CD14-positive monocyte (primary cell): ENCODE measurements at regions of chr3 and their contacts with region 1.

Region 1: GRCh38 chr3:107235928-107236315 is 141.3 kb upstream of the CCDC54 start:
- DNase-seq: peak; percentile 44 to 62 (median 56)
- H3K4me3 ChIP-seq: peak overlapping the region; percentile 16 to 63 (median 26)
- H3K4me3 Mint-ChIP-seq: peak overlapping the region; percentile 59 to 72
- H3K27ac ChIP-seq: no peak overlapping the region
- H3K27ac Mint-ChIP-seq: no peak overlapping the region
- H3K4me1 ChIP-seq: peaks cover 10 to 11% of the 10 kb centered on the region in 2 donors
- H3K4me1 Mint-ChIP-seq: peaks cover 12% of the 10 kb centered on the region
- H3K27me3 ChIP-seq: no peaks in the 10 kb centered on the region
- H3K27me3 Mint-ChIP-seq: peaks cover 0 to 3% (median 1%) of the 10 kb centered on the region in 3 donors
- CTCF ChIP-seq: peak; percentile 88

Region 2: GRCh38 chr3:107710851-107711250 is 474.9 kb after region 1 on chr3:
- intact Hi-C with region 1: no loop called
- DNase-seq: no peak
- H3K4me3 ChIP-seq: no peak overlapping the region
- H3K4me3 Mint-ChIP-seq: no peak overlapping the region
- H3K27ac ChIP-seq: no peak overlapping the region
- H3K27ac Mint-ChIP-seq: no peak overlapping the region
- H3K4me1 ChIP-seq: no peaks in the 10 kb centered on the region
- H3K4me1 Mint-ChIP-seq: peaks cover 2% of the 10 kb centered on the region
- H3K27me3 ChIP-seq: no peaks in the 10 kb centered on the region
- H3K27me3 Mint-ChIP-seq: no peaks in the 10 kb centered on the region
- CTCF ChIP-seq: no peak

Region 3: DNA sequence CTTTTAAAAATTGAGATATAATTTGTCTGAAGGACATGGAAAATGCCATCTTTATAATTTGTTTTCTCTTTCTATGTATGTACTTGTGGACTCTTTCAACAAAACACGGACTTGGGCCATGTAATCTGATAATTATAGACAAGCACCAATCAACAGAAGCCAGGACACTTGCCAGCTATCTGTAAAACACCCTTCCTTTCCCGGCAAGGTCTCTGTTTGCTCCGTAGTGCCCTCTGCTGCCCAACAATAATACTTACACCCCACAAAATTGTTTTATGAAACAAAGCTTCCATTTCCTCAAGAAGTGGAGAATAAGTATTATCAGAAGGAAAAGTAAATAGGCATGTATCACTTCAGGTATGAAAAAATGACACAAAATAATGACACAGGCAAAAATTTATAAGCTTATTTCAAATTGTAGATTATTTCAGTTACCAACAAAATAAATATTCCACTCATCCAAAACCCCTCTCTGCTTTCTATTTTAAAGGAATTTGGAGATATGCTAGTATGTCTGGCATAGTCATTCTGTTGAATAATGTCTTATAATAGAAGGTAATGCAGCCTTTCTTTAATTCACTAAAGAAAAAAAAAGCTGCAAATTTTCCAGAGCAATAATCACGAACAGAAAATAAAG is 1241.7 kb after region 1 on chr3:
- intact Hi-C with region 1: loop called in 1 of 2 experiments (anchors 10 kb)
- DNase-seq: peak; percentile 33 to 48 (median 41)
- H3K4me3 ChIP-seq: no peak overlapping the region
- H3K4me3 Mint-ChIP-seq: no peak overlapping the region
- H3K27ac ChIP-seq: no peak overlapping the region
- H3K27ac Mint-ChIP-seq: no peak overlapping the region
- H3K4me1 ChIP-seq: no peaks in the 10 kb centered on the region
- H3K4me1 Mint-ChIP-seq: peaks cover 1% of the 10 kb centered on the region
- H3K27me3 ChIP-seq: no peaks in the 10 kb centered on the region
- H3K27me3 Mint-ChIP-seq: no peaks in the 10 kb centered on the region
- CTCF ChIP-seq: peak; percentile 80